HCT116 (cell line): ENCODE measurements at regions of chr2 and their contacts with region 1.

Region 1: DNA sequence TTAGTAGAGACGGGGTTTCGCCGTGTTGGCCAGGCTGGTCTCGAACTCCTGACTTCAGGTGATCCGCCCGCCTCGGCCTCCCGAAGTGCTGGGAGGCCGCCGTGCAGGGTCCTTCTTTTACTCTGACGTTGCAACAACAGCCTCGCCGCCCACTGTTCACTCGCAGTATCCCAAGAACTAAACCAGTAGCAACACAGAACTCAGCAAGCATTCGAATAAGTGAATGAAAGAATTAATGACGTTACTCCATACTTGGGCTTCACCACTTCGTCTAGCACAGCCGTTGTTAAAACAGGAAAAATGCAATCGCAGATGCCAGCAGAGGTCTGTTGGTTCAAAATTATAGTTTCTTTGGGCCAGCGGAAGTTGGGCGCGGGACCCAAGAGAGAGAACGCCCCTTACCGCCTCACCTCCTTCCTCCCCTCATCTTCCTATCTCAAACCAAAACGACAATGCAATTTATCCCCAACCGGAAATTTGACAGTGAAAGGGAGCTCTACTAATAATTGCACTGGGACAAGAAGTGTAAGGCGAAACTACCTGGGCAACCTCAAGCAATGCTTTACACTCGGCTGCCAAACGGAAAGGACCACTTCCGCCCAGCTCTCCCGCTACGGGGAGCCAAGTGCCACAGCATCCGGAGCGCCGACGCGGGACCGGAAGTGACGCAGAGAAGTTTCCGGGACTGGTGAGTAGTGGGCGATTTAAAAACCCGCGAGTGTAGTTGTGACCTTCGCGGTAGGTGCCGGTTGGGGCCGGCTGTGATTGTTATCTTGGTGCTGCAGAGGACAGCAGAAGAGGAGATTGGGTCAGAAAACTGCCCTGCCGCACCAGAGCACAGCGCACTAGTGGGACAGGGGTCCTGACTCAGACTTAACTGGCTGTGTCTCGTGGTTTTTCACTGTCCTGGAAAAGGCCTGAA is at the starts of genes NIF3L1 and PPIL3:
- DNase-seq: peak; percentile 99
- ATAC-seq: peak; percentile 85
- H3K4me3 ChIP-seq: peak within 1 kb of the TSS; percentile 63 to 73
- H3K27ac ChIP-seq: peak within 1 kb of the TSS; percentile 94
- H3K4me1 ChIP-seq: peaks cover 0 to 16% of the 10 kb centered on the region in 2 experiments; a peak in 3 of 4 replicates
- H3K27me3 ChIP-seq: no peaks in the 10 kb centered on the region
- CTCF ChIP-seq: no peak
- POLR2A ChIP-seq: peak; percentile 36
- RAD21 ChIP-seq: no peak; the same call in 1 of the 2 replicates
- total RNA-seq, gene NIF3L1: 44.7 TPM
- total RNA-seq, gene PPIL3: 55.9 TPM

Region 2: DNA sequence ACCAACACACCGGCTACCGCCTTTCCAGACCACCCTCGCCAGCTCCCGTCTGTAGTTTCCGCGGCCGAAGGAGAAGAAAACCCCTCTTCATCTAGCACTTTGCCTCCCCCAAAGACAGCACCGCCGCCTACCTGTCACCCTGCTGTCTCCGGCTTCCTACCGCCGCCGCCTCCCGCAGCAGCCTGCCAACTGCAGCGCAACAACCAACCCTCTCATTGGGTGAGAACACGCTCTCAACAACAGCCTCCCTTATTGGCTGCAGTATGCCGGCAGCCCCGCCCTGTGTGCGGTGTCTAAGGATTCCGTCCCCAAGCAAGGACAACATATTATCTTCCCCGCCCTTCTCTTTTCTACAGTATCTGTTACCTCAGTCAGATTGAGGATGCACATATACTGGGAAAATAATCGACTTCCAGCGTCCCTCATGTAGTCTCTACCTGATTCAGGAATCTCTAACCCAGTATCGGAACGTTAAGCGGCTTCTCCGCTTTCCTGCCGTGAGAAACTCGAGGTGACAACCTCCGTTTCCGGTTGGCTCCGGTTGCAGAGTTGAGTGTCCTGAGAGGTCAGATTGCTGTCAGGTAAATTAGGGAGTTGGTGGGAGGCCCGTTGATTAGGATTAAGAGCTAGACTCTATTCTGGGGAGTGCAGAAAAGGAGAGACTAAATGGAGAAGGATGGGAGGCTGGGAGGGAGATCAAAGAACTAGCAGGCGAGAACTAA is 182.7 kb after region 1 on chr2 and contains the starts of genes HYCC2 and NDUFB3:
- CTCF ChIA-PET with region 1: no interaction called
- POLR2A ChIA-PET with region 1: no interaction called
- RAD21 ChIA-PET with region 1: no interaction called
- intact Hi-C with region 1: loop called (anchors 5 kb)
- DNase-seq: peak; percentile 92
- ATAC-seq: peak; percentile 94
- H3K4me3 ChIP-seq: peak within 1 kb of the TSS; percentile 77 to 93
- H3K27ac ChIP-seq: peak within 1 kb of the TSS; percentile 64
- H3K4me1 ChIP-seq: peaks cover 4 to 18% of the 10 kb centered on the region in 2 experiments; a peak in 3 of 4 replicates
- H3K27me3 ChIP-seq: no peaks in the 10 kb centered on the region
- CTCF ChIP-seq: 0 out of 6 replicates have a peak, but pooled peaks of 2 of the 3 experiments have one; percentile 10 to 11
- POLR2A ChIP-seq: peak; percentile 77
- RAD21 ChIP-seq: no peak
- total RNA-seq, gene HYCC2: 9.9 TPM
- total RNA-seq, gene NDUFB3: 94.6 TPM